Activated naive CD4-positive, alpha-beta T cell treated with anti-CD3 and anti-CD28 coated beads for 36 hours (primary cell): ENCODE measurements at regions of chr17 and their contacts with region 1.

Region 1: GRCh38 chr17:43927060-43927864 is 15.0 kb downstream of the PPY start:
- DNase-seq: peak; percentile 44
- H3K4me3 Mint-ChIP-seq: peak overlapping the region; percentile 71
- H3K27ac Mint-ChIP-seq: peak overlapping the region; percentile 10
- H3K4me1 Mint-ChIP-seq: peaks cover 23% of the 10 kb centered on the region
- H3K27me3 Mint-ChIP-seq: no peaks in the 10 kb centered on the region

Region 2: DNA sequence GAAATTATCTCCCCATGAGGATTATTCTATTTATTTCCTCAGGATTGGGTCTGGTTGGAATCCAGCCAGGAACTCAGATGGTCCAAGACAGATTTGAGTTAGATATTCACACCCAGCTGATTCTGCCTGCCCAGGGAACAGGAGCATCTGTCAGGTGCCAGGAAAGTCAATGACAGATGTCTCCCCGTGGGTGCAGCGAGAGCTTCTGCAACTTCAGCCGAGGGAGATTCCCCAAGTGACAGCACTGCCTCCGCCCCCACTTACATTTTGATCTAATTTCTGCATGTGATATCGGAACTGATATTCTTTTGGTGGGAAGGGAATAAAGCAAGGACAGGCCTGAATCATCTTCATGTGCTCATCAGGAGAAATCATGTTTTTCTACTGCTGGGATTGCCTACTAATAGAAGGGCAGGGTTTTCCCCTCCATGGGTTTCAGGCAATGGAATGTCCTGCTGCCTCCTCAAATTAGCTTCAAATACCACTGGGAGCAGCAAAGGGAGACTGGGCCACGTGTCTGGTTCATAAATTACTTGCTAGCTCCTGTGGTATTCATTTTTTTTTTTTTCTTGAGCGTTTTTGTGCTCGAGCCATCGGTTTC is 459.2 kb before region 1 on chr17:
- CTCF ChIA-PET with region 1: no interaction called
- intact Hi-C with region 1: no loop called
- DNase-seq: no peak
- H3K4me3 Mint-ChIP-seq: no peak overlapping the region
- H3K27ac Mint-ChIP-seq: no peak overlapping the region
- H3K4me1 Mint-ChIP-seq: no peaks in the 10 kb centered on the region
- H3K27me3 Mint-ChIP-seq: peaks cover 4% of the 10 kb centered on the region

Region 3: GRCh38 chr17:43832976-43833829 is 94.1 kb before region 1 on chr17 and contains the start of gene MPP3:
- CTCF ChIA-PET with region 1: no interaction called
- intact Hi-C with region 1: no loop called
- DNase-seq: peak; percentile 34
- H3K4me3 Mint-ChIP-seq: peak within 1 kb of the TSS; percentile 72
- H3K27ac Mint-ChIP-seq: no peak within 1 kb of the TSS
- H3K4me1 Mint-ChIP-seq: peaks cover 15% of the 10 kb centered on the region
- H3K27me3 Mint-ChIP-seq: peaks cover 28% of the 10 kb centered on the region
- total RNA-seq, gene MPP3: 0.30 to 0.33 TPM

Region 4: GRCh38 chr17:43907425-43907981 is 19.8 kb before region 1 on chr17 and contains the start of gene MPP2:
- CTCF ChIA-PET with region 1: interaction called, 15 read pairs
- intact Hi-C with region 1: no loop called
- DNase-seq: peak; percentile 64
- H3K4me3 Mint-ChIP-seq: peak within 1 kb of the TSS; percentile 63
- H3K27ac Mint-ChIP-seq: no peak within 1 kb of the TSS
- H3K4me1 Mint-ChIP-seq: peaks cover 18% of the 10 kb centered on the region
- H3K27me3 Mint-ChIP-seq: peaks cover 4% of the 10 kb centered on the region
- total RNA-seq, gene MPP2: 2.3 to 2.5 TPM

Region 5: DNA sequence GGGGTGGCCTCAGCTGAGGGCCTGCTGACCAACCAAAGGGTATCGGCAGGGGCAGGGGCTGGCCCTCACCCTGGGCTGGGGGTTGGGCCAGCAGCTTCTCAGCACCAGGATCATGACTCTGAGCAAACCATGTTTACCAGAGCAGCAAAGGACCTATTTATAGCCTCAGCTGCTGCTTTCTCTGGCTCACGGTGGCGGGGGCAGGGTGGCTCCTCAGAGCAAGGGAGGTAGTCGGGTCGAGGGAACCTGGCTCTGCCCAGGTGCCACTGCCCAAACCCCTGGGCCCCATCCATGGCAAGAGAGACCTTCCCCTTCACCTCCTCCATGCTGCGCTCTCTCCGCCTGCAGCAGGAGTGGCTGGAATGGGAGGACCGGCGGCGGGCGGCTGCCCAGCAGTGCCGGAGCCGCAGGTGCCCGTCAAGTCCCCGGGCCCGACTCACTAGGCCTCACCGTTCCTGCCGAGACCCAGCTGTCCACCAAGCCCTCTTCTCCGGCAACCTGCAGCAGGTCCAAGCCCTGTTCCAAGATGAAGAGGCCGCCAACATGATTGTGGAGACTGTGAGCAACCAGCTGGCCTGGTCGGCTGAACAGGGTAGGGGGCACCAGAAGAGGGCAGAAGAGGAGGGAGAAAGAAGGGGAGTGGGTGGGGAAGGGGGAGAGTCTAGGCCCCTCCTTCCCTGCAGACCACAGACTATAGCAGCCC is 243.4 kb after region 1 on chr17 and contains the start of gene ASB16:
- CTCF ChIA-PET with region 1: interaction called, 10 read pairs
- intact Hi-C with region 1: no loop called
- DNase-seq: no peak
- H3K4me3 Mint-ChIP-seq: no peak within 1 kb of the TSS
- H3K27ac Mint-ChIP-seq: no peak within 1 kb of the TSS
- H3K4me1 Mint-ChIP-seq: peaks cover 6% of the 10 kb centered on the region
- H3K27me3 Mint-ChIP-seq: no peaks in the 10 kb centered on the region
- total RNA-seq, gene ASB16: 0.12 TPM in 1 of 2 experiments, not detected in the other